ENCODE measurements at regions of chr6 and their contacts with region 1.

Region 1: DNA sequence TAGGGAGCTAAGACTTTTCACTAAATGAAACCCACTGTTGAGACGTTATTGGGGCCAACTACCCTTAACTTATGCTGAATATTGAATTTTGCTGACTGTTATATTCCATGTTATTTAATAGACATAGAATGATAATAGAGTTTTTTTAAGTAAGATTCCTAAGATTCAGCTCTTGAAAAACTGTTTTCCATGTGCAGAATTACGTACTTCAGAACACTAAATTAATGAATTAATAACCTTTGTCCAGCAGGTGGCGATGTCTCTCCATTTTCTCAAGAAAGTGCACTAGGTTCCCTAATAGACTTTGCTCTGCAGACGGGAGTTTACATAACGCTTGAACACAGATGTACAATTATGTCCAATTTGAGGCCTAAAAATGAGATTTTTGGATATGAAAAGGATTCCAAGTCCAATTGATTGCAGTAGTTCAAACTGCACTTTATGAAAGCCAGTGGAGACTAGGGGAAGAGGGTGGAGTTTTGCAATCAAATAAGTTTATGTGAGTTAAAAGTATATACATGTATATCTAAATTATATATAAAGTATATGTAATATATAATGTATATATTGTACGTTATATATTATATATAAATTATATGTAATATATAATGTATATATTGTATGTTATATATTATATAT is 282.1 kb downstream of the UST start:
- DNase-seq: peak; percentile 65
- H3K4me3 Mint-ChIP-seq: peak overlapping the region; percentile 47
- H3K27ac Mint-ChIP-seq: peak overlapping the region; percentile 72
- H3K4me1 Mint-ChIP-seq: peaks cover 48% of the 10 kb centered on the region
- H3K27me3 Mint-ChIP-seq: no peaks in the 10 kb centered on the region

Region 2: GRCh38 chr6:148559848-148560433 is 468.9 kb before region 1 on chr6:
- CTCF ChIA-PET with region 1: interaction called, 6 read pairs
- POLR2A ChIA-PET with region 1: no interaction called
- intact Hi-C with region 1: loop called (anchors 5 kb)
- DNase-seq: peak; percentile 77
- H3K4me3 Mint-ChIP-seq: no peak overlapping the region
- H3K27ac Mint-ChIP-seq: no peak overlapping the region
- H3K4me1 Mint-ChIP-seq: peaks cover 7% of the 10 kb centered on the region
- H3K27me3 Mint-ChIP-seq: peaks cover 15% of the 10 kb centered on the region

Region 3: DNA sequence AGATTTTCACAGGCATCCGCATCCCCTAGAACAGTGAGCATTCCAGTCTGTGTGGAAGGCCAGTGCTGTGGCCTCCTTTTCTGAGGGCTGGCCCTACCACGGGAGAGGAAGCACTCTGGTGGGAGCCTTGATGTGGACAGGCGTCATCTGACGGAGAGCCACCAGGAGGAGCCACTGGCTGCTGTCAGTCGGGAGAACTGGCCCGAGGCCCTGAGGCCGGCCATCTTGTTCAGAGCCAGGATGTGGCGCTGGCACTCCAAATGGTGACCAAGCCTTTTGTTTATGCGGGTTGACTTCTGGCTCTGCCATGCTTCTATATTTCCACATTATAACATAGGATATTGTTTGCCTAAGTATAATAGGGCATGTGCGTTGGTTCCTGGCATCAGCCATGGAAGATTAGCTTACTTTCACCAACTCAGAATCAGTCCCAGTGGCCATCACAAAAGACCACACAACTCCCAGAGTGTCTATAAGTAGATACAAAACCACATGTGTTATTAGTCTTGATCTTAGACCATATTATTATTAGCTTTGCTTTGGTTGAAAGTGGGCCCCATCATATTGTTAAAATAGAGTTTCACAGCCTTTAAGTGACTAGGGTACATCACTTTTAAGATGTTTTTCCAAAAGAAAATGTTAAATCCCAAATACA is 14.7 kb after region 1 on chr6:
- CTCF ChIA-PET with region 1: interaction called, 12 read pairs
- POLR2A ChIA-PET with region 1: interaction called, 24 read pairs
- intact Hi-C with region 1: no loop called
- DNase-seq: peak; percentile 62
- H3K4me3 Mint-ChIP-seq: no peak overlapping the region
- H3K27ac Mint-ChIP-seq: no peak overlapping the region
- H3K4me1 Mint-ChIP-seq: peaks cover 50% of the 10 kb centered on the region
- H3K27me3 Mint-ChIP-seq: no peaks in the 10 kb centered on the region

Region 4: GRCh38 chr6:149075616-149076364 is 46.9 kb after region 1 on chr6:
- CTCF ChIA-PET with region 1: interaction called, 29 read pairs
- POLR2A ChIA-PET with region 1: interaction called, 62 read pairs
- intact Hi-C with region 1: loop called (anchors 1 kb)
- DNase-seq: peak; percentile 51
- H3K4me3 Mint-ChIP-seq: peak overlapping the region; percentile 7
- H3K27ac Mint-ChIP-seq: peak overlapping the region; percentile 93
- H3K4me1 Mint-ChIP-seq: peaks cover 40% of the 10 kb centered on the region
- H3K27me3 Mint-ChIP-seq: no peaks in the 10 kb centered on the region

Region 5: DNA sequence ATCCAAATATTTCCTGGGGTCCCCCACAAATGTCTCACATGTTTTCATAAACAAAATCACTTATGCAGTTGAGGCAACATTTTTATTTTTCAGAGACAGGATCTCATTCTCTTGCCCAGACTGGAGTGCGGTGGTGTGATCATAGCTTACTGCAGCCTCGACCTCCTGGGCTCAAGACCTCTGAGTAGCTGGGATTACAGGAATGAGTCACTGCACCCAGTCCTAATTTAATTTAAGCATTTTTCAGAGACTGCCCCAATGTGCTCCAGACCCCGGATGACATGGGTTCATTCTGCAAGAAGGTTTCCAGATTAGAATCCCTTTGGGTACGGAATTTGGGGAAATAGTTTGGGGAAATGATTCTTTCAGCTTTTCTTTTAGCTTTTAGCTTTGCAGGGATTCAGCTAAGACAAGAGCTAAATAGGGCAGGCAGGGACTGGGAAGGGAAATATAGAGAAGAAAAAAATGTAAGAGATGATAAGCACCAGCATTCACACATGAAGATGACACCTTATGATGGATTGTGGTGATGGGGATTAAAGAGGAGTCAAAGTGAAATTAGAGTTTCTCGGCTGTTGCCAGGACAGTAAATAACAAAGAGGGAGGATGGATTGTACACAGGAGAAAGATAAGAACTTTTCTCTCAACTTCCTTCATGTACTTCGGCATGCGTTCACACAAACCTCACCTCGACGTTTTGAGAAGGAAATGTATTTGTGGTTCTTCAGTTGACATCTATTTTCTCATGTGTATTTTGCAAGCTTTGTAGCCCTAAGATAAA is 119.2 kb after region 1 on chr6:
- CTCF ChIA-PET with region 1: interaction called, 6 read pairs
- POLR2A ChIA-PET with region 1: interaction called, 7 read pairs
- intact Hi-C with region 1: loop called (anchors 2 kb)
- DNase-seq: peak; percentile 47
- H3K4me3 Mint-ChIP-seq: peak overlapping the region; percentile 45
- H3K27ac Mint-ChIP-seq: peak overlapping the region; percentile 91
- H3K4me1 Mint-ChIP-seq: peaks cover 87% of the 10 kb centered on the region
- H3K27me3 Mint-ChIP-seq: no peaks in the 10 kb centered on the region

Region 6: DNA sequence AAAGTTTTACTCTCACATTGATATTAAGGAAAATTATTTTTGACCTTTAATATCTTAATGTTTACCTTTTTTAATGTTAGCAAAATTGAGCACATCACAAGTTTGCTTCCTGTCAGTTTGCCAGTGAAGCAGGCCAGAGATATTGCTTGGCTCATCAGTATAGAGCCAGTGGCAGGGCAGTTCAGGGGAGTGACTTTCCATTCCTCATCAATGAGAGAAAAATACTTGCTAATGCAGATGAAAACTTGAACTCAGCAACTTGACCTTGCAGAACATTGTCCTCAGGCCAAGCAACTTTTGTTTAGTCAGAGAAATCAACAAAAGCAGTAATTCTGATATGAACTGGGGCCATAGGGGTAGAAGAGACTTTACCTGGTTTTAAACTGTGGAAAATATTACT is 295.5 kb after region 1 on chr6:
- CTCF ChIA-PET with region 1: interaction called, 4 read pairs
- POLR2A ChIA-PET with region 1: interaction called, 48 read pairs
- intact Hi-C with region 1: loop called (anchors 1 kb)
- DNase-seq: no peak
- H3K4me3 Mint-ChIP-seq: peak overlapping the region; percentile 40
- H3K27ac Mint-ChIP-seq: peak overlapping the region; percentile 81
- H3K4me1 Mint-ChIP-seq: peaks cover 80% of the 10 kb centered on the region
- H3K27me3 Mint-ChIP-seq: no peaks in the 10 kb centered on the region

Region 7: GRCh38 chr6:149499066-149499465 is 470.2 kb after region 1 on chr6:
- CTCF ChIA-PET with region 1: interaction called, 5 read pairs
- POLR2A ChIA-PET with region 1: interaction called, 5 read pairs
- intact Hi-C with region 1: loop called (anchors 5 kb)
- DNase-seq: no peak
- H3K4me3 Mint-ChIP-seq: no peak overlapping the region
- H3K27ac Mint-ChIP-seq: peak overlapping the region; percentile 97
- H3K4me1 Mint-ChIP-seq: peaks cover 82% of the 10 kb centered on the region
- H3K27me3 Mint-ChIP-seq: no peaks in the 10 kb centered on the region

Measured in activated CD4-positive, alpha-beta memory T cell treated with anti-CD3 and anti-CD28 coated beads for 36 hours (primary cell).